Tibial artery (tissue), 4 donors: ENCODE measurements at regions of chr6 and their contacts with region 1.

Region 1: DNA sequence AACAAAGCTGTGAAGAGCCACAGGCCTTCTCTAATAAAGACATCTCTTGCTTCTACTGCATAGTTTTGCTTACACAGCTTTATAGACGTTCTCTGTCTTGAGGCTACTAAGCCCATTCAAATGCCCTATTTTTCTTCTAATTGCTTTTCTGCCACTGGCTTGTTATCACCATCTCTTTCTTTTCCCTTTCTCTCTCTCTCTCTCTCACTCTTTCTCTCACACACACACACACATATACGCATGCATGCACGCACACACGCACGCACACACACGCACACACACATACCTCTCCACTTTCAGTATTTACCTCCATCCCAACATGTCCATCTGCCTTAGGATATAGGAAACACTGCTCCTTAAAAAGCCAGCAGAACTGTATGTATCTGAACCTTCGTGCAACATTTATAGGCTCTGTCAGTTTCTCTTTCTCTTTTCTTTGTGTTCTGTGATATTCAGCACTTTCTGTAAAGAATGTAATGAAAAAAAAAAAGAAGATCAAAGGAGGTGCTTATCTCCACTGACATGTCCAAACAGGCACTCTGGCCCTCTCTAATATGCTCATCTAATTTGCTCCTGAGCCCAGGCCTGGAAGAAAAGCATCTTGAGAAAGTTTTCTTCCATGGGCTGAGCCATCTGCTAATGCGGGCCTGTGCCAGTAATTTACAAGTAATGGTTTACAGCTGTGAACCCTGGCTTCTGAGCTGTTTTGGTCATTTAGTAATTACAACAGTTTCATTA is 1046.7 kb upstream of the MAP3K7 start:
- DNase-seq: no peak
- H3K4me3 ChIP-seq: no peak overlapping the region
- H3K27ac ChIP-seq: no peak overlapping the region
- H3K4me1 ChIP-seq: no peaks in the 10 kb centered on the region
- H3K27me3 ChIP-seq: no peaks in the 10 kb centered on the region
- CTCF ChIP-seq: no peak

Region 2: GRCh38 chr6:91761621-91762020 is 128.1 kb after region 1 on chr6:
- intact Hi-C with region 1: no loop called
- DNase-seq: no peak
- H3K4me3 ChIP-seq: no peak overlapping the region
- H3K27ac ChIP-seq: no peak overlapping the region
- H3K4me1 ChIP-seq: no peaks in the 10 kb centered on the region
- H3K27me3 ChIP-seq: no peaks in the 10 kb centered on the region
- CTCF ChIP-seq: no peak

Region 3: DNA sequence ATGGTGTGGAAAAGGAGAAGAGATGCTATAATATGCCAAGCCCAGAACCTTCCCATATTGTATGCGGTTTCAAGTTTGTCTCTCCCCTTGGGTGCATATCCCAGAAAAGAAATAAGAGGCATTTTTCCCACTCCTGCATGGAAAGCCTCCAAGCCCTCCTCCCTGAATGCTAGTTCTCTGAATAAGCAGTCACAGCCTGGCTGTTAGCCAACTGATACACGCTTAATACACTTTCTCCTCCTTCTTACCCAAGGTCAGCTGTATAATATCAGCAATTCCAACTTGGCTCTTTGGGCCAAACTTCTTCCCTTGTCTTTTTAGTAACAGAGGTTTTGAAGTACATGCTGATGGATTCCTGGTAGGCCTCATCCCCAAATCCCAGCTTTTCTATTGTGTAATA is 1345.7 kb after region 1 on chr6:
- intact Hi-C with region 1: loop called (anchors 5 kb)
- DNase-seq: no peak
- H3K4me3 ChIP-seq: no peak overlapping the region
- H3K27ac ChIP-seq: no peak overlapping the region
- H3K4me1 ChIP-seq: no peaks in the 10 kb centered on the region
- H3K27me3 ChIP-seq: no peaks in the 10 kb centered on the region
- CTCF ChIP-seq: no peak

Region 4: GRCh38 chr6:93136111-93136510 is 1502.6 kb after region 1 on chr6:
- intact Hi-C with region 1: no loop called
- DNase-seq: no peak
- H3K4me3 ChIP-seq: no peak overlapping the region
- H3K27ac ChIP-seq: no peak overlapping the region
- H3K4me1 ChIP-seq: no peaks in the 10 kb centered on the region
- H3K27me3 ChIP-seq: no peaks in the 10 kb centered on the region
- CTCF ChIP-seq: no peak